ENCODE measurements at regions of chr6 and their contacts with region 1.

Region 1: DNA sequence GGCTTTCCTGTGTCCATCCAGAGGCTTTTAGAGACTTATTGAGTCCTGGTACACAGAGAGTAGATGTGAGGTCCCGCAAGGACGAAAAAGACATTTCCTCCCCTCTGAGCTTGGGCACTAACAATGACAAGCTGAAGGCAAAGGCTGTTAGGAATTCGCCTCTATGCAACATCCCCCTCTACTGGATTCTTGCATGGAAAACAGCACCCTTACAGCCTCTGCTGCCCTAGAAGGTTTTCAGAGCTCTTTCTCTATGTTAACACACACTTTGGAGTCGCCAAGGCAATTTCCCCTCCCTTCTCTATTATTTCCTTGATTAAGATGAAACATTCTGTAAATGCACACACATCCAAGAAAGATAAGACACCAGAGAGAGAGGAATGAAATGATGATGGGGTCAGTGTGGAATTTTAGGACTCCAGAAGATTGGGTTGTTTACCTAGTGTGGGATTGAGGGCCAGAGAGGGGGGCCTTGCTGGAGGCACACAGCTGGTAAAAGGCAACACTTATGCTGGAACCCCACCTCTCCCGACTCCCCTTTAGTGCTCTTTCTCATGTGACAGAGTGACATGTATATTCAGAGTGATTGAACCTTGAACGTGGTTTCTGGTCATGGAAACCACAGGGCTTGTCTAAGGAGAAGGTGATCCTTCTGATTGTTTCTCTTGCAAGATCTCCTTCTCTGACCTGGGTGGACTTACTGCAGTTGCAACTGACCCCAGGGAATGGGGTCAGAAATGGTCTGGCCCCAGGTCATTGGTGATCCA is 300.7 kb downstream of the CLIC5 start:
- DNase-seq: no peak
- ATAC-seq: peak; percentile 86
- H3K4me3 ChIP-seq: no peak overlapping the region
- H3K27ac ChIP-seq: no peak overlapping the region
- H3K4me1 ChIP-seq: no peaks in the 10 kb centered on the region
- H3K27me3 ChIP-seq: no peaks in the 10 kb centered on the region

Region 2: GRCh38 chr6:44655412-44656342 is 1059.2 kb before region 1 on chr6:
- intact Hi-C with region 1: loop called (anchors 2 to 5 kb)
- DNase-seq: peak; percentile 83 to 90
- ATAC-seq: peak; percentile 75
- H3K4me3 ChIP-seq: no peak overlapping the region
- H3K27ac ChIP-seq: no peak overlapping the region
- H3K4me1 ChIP-seq: no peaks in the 10 kb centered on the region
- H3K27me3 ChIP-seq: no peaks in the 10 kb centered on the region

Region 3: DNA sequence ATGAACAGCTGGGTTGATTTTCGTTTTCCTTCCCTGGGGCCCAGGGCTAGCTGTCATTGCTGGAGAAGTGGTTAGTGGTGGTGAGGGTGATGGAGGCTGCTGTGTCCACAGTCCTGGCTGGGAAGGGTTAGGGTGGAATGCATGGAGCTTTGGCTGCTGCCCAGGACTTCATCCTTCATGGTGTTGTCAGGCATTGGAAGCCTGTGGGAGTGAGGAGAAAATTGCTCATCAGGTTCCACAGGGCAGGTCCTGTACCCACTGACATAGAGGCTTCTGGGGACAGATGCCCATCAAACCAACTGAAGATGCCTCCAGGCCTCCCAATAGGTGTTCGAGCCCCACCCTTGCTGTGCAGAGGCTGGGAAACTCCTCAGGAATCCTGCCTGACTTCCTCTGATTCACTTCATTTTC is 74.8 kb before region 1 on chr6:
- intact Hi-C with region 1: no loop called
- DNase-seq: no peak
- ATAC-seq: no peak
- H3K4me3 ChIP-seq: no peak overlapping the region
- H3K27ac ChIP-seq: no peak overlapping the region
- H3K4me1 ChIP-seq: no peaks in the 10 kb centered on the region
- H3K27me3 ChIP-seq: no peaks in the 10 kb centered on the region